ENCODE measurements at regions of chr1 and their contacts with region 1.

Region 1: DNA sequence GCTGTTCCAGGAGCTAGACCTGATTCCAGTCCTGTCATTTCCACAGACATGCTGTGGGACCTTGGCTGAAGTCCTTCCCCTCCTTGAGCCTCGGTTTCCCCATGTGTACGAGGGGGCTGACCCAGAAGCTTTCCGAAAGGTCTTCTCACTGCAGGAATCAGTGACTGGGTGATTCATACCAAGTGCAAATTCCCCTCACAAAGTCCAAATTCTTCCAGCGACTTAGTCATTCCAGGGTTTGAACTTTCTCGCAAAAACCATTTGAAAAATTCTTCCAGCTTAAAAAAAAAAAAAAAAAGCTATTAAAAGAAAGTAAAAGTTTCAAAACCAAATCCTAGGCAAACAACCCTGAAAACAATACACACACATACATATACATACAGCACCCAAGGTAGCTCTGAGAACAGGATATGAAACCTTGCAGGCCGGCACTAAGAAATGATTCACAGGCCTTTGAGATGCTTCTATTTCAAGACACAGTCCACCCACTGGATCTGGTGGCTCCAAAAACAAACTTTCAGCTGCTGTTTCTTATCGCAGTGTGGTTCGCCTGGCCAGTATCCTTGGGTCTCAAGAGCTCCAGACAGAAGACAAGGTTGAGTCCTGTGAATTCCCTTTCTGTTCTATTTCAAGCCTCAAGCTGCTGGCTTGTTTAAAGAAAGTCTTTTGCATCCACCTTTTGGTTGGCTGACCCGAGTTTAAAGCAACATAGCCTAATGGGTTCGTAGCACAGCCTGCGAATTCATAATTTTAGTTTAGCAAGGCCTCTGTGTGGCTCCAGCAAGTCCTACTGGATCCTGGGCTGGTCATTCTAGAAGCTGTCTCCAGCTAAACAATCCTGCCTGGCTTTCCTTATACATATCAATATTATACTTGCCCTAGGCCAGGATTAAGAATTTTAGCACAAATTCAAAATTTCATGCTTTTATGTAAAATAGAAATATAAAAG is 18.0 kb upstream of the ID3 start:
- DNase-seq: peak; percentile 92
- ATAC-seq: peak; percentile 80
- H3K4me3 ChIP-seq: peak overlapping the region; percentile 61; the same call in 1 of the 2 replicates
- H3K27ac ChIP-seq: peak overlapping the region; percentile 96
- H3K4me1 ChIP-seq: peaks cover 53% of the 10 kb centered on the region
- H3K27me3 ChIP-seq: no peaks in the 10 kb centered on the region
- CTCF ChIP-seq: no peak
- EP300 ChIP-seq: peak; percentile 75 to 85; a peak in 3 of 4 replicates
- POLR2A ChIP-seq: 0 out of 2 replicates have a peak, but pooled peaks have one; percentile 20
- RAD21 ChIP-seq: peak; percentile 31; the same call in 1 of the 2 replicates

Region 2: DNA sequence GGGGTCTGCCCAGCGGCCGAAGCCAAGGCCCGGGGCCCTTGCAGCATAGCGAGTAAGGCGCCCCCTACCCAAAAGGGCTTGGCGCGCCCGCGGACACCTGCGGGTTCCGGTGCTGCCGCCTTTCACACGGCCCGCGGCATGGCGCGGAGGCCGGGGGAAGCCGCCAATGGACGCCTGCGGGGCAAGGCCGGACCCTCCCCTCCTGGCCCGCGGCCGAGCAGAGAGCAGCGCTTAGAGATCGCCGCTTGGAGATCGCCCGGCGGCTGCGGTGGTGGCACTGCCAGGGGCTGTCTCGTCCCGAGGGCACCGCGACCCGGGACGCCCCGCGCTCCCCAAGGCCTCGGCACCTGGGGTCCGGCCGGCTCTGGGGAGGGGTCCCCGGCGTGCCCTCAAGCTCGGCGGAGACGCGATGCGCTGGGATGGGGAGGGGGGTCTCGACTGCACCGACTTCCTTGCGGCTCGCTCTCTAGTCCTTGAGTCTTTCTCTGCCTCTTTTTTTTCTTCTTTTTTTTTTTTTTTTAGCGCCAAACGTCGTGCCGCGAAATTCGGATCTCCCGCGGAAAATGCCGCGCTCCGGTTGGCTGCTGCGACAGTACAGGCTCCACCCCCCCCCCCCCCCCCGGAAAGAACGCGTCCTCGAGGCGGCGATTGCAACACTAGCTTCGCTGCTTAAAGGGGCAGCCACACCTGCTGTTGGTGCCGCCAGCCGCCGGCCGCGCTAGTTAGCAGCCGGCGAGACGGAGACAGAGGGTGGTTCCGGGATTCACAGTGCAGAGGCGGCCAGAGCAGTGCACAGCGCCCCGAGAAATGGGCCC is 46.4 kb before region 1 on chr1 and contains the start of gene E2F2:
- CTCF ChIA-PET with region 1: interaction called, 4 read pairs
- POLR2A ChIA-PET with region 1: interaction called, 8 read pairs
- RAD21 ChIA-PET with region 1: interaction called, 5 read pairs
- SMC1A ChIA-PET with region 1: interaction called, 13 read pairs
- in situ Hi-C with region 1: no loop called
- intact Hi-C with region 1: no loop called
- DNase-seq: no peak
- ATAC-seq: peak; percentile 72
- H3K4me3 ChIP-seq: peak within 1 kb of the TSS; percentile 85
- H3K27ac ChIP-seq: peak within 1 kb of the TSS; percentile 89
- H3K4me1 ChIP-seq: peaks cover 64% of the 10 kb centered on the region
- H3K27me3 ChIP-seq: no peaks in the 10 kb centered on the region
- CTCF ChIP-seq: peak in 2 of 3 experiments; percentile 23 to 29; a peak in 3 of 6 replicates
- EP300 ChIP-seq: no peak
- POLR2A ChIP-seq: peak; percentile 66
- RAD21 ChIP-seq: no peak
- polyA plus RNA-seq, gene E2F2: 4.3 to 4.6 TPM

Region 3: DNA sequence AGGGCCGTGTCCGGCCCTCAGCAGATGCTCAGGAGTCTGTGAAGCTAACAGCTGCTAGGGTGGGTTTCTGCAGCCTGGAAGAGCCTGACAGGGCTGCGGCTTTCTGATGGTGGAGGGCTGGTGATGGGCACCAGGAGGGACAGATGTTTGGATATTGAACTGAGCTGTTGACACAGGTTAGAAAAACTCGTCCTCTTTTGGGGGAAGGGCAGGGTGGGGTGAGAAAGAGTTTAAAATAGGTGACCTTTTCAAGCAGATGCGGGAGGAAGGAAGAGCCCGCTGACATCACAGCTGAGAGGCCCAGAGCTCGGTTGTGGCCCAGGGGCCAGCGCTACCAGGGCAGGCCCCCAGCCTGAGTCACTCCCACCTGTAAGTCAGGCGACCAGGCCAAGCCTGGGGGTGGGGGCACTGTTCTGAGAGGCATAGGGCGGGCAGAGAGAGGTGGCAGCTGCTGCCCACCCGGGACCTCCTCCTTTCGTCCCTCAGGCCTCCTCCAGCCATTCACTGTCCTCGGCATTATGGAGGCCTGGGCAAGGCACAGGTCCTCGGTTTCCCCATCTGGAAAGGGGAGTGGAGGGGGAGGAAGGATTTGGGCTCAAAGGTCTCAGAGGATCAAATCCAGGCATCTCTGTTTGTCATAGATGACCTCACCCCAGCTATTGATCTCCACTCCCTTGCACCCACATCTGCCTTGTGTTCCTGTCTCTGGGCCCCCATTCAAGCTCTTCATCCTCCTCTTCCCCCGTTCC is 14.3 kb after region 1 on chr1:
- CTCF ChIA-PET with region 1: interaction called, 64 read pairs
- POLR2A ChIA-PET with region 1: interaction called, 271 read pairs
- RAD21 ChIA-PET with region 1: interaction called, 252 read pairs
- SMC1A ChIA-PET with region 1: interaction called, 419 read pairs
- in situ Hi-C with region 1: no loop called
- intact Hi-C with region 1: loop called (anchors 1 kb)
- DNase-seq: no peak
- ATAC-seq: peak; percentile 71
- H3K4me3 ChIP-seq: peak overlapping the region; percentile 9; the same call in 1 of the 2 replicates
- H3K27ac ChIP-seq: peak overlapping the region; percentile 93
- H3K4me1 ChIP-seq: peaks cover 72% of the 10 kb centered on the region
- H3K27me3 ChIP-seq: no peaks in the 10 kb centered on the region
- CTCF ChIP-seq: no peak
- EP300 ChIP-seq: peak; percentile 80 to 81; a peak in 3 of 4 replicates
- POLR2A ChIP-seq: peak; percentile 48; the same call in 1 of the 2 replicates
- RAD21 ChIP-seq: no peak

Region 4: DNA sequence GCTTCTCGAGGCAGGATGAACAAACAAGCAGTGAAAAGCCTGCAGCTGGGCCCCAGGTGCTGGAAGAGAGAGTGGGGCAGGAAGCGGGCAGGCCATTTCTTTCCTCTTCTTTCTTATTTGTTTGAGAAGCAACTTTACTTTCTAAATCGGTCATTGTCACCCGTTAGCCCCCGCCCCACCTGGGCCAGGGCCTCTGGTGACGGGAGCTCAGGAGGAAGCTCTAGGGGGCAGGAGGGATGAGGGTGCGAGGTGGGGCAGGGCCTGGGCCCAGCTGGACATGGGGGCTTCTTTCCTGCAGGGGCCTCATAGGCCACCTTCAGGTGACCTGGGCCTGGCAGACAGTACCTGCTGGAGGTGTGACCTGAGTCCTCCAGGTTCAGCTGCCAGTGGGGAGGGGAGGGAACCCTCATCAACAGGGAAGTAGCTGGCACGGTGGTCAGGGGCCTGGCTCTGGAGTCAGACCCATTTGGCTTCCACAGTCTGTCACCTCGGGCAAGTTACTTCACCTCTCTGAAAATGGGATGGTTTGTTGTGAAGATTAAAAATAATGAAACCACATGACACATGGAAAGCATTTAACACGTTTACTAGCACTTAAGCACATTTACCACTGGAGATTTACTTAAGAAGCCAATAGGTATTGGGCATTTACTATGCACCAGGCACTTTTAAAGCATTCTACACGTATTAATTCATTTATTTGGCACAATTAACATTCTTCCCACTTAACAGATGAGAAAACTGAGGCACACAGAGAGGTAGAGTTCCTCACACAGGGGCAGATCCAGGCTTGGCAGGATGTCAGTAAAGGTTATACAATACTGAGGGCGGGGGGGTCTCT is 36.1 kb after region 1 on chr1:
- CTCF ChIA-PET with region 1: interaction called, 5 read pairs
- POLR2A ChIA-PET with region 1: interaction called, 17 read pairs
- RAD21 ChIA-PET with region 1: interaction called, 13 read pairs
- SMC1A ChIA-PET with region 1: interaction called, 24 read pairs
- in situ Hi-C with region 1: no loop called
- intact Hi-C with region 1: no loop called
- DNase-seq: no peak
- ATAC-seq: peak; percentile 63
- H3K4me3 ChIP-seq: no peak overlapping the region; the same call in 1 of the 2 replicates
- H3K27ac ChIP-seq: peak overlapping the region; percentile 80
- H3K4me1 ChIP-seq: peaks cover 37% of the 10 kb centered on the region
- H3K27me3 ChIP-seq: no peaks in the 10 kb centered on the region
- CTCF ChIP-seq: 0 out of 6 replicates have a peak, but pooled peaks of 1 of the 3 experiments have one; percentile 9
- EP300 ChIP-seq: no peak
- POLR2A ChIP-seq: no peak
- RAD21 ChIP-seq: no peak

Region 5: GRCh38 chr1:25022361-25023189 is 1445.2 kb after region 1 on chr1:
- CTCF ChIA-PET with region 1: no interaction called
- POLR2A ChIA-PET with region 1: no interaction called
- RAD21 ChIA-PET with region 1: no interaction called
- SMC1A ChIA-PET with region 1: no interaction called
- in situ Hi-C with region 1: loop called (anchors 25 kb)
- intact Hi-C with region 1: no loop called
- DNase-seq: peak; percentile 97
- ATAC-seq: peak; percentile 85
- H3K4me3 ChIP-seq: peak overlapping the region; percentile 56
- H3K27ac ChIP-seq: peak overlapping the region; percentile 100
- H3K4me1 ChIP-seq: peaks cover 94% of the 10 kb centered on the region
- H3K27me3 ChIP-seq: no peaks in the 10 kb centered on the region
- CTCF ChIP-seq: no peak
- EP300 ChIP-seq: peak; percentile 96 to 97
- POLR2A ChIP-seq: no peak
- RAD21 ChIP-seq: peak; percentile 34